ENCODE measurements at regions of chr7 and their contacts with region 1.

Region 1: GRCh38 chr7:70856866-70857630 is 274.9 kb upstream of the GALNT17 start:
- DNase-seq: peak; percentile 18
- H3K4me3 Mint-ChIP-seq: no peak overlapping the region
- H3K27ac Mint-ChIP-seq: no peak overlapping the region
- H3K4me1 Mint-ChIP-seq: no peaks in the 10 kb centered on the region
- H3K27me3 Mint-ChIP-seq: no peaks in the 10 kb centered on the region
- CTCF ChIP-seq: peak; percentile 72

Region 2: GRCh38 chr7:70881167-70881847 is 24.3 kb after region 1 on chr7:
- CTCF ChIA-PET with region 1: no interaction called
- POLR2A ChIA-PET with region 1: no interaction called
- intact Hi-C with region 1: no loop called
- DNase-seq: no peak
- H3K4me3 Mint-ChIP-seq: no peak overlapping the region
- H3K27ac Mint-ChIP-seq: no peak overlapping the region
- H3K4me1 Mint-ChIP-seq: no peaks in the 10 kb centered on the region
- H3K27me3 Mint-ChIP-seq: no peaks in the 10 kb centered on the region
- CTCF ChIP-seq: no peak

Region 3: GRCh38 chr7:71511361-71511807 is 654.3 kb after region 1 on chr7:
- CTCF ChIA-PET with region 1: interaction called, 3 read pairs
- POLR2A ChIA-PET with region 1: no interaction called
- intact Hi-C with region 1: loop called (anchors 1 kb)
- DNase-seq: no peak
- H3K4me3 Mint-ChIP-seq: no peak overlapping the region
- H3K27ac Mint-ChIP-seq: no peak overlapping the region
- H3K4me1 Mint-ChIP-seq: no peaks in the 10 kb centered on the region
- H3K27me3 Mint-ChIP-seq: no peaks in the 10 kb centered on the region
- CTCF ChIP-seq: no peak

Measured in MCF 10A (cell line).